ENCODE measurements at regions of chr9 and their contacts with region 1.

Region 1: DNA sequence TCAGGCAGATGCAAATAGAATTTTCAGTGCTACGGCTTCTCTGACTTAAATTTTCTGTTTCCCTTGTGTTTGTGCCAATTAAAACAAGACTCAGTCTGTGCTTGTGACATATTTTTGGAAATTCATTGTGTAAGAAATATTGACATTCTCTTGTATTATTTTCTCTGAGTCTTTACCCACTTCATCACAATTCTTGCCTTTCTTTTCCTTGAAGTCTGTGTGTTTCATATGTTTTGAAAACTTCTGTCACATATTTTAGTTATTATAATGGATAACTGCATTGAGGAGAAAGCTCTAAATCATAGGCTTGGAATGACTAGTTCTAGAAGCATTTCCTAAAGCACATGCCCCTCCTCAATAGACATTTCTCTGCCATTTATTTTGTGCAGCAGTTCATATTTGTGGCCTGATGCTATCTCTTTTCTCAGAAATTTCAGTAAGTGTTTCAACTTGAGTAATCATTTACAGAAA is 206.6 kb downstream of the PALM2AKAP2 start:
- DNase-seq: peak; percentile 73
- H3K4me3 ChIP-seq: no peak overlapping the region
- H3K27ac ChIP-seq: peak overlapping the region; percentile 56
- H3K4me1 ChIP-seq: peaks cover 9% of the 10 kb centered on the region
- H3K27me3 ChIP-seq: no peaks in the 10 kb centered on the region
- CTCF ChIP-seq: no peak

Region 2: DNA sequence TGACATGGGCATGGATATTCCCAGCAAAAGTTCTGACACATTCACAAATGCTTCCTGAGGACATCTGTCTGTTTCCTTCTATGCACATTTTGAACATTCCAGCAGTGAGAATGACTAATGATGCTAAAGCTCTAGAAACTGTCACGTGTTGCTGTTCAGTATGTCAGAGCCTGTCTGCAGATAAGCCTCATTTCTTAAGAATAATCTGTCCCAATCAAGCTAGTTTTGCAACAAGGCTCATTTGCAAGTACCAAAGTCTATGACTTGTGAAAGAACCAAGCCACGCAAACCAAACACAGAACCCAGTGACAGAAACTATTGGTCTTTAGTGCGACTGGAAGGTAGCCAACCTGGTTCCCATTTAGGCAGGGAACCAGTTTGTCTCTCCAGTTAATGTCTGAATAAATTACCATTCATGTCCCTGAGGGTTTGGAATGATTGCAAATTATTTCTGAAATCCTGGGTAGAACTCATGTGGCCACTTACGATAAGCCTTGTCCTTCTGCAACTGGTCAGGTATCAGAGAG is 42.9 kb after region 1 on chr9:
- CTCF ChIA-PET with region 1: no interaction called
- dilution Hi-C with region 1: loop called (anchors 5 kb)
- in situ Hi-C with region 1: no loop called
- intact Hi-C with region 1: no loop called
- DNase-seq: peak; percentile 80
- H3K4me3 ChIP-seq: no peak overlapping the region
- H3K27ac ChIP-seq: peak overlapping the region; percentile 43
- H3K4me1 ChIP-seq: peaks cover 44% of the 10 kb centered on the region
- H3K27me3 ChIP-seq: no peaks in the 10 kb centered on the region
- CTCF ChIP-seq: no peak